PC-9 (cell line): ENCODE measurements at regions of chr7 and their contacts with region 1.

Region 1: GRCh38 chr7:101363734-101364374 is 1.2 kb downstream of the COL26A1 start:
- DNase-seq: peak; percentile 39 to 73
- H3K4me3 ChIP-seq: peak overlapping the region; percentile 34; the same call in 1 of the 2 replicates
- H3K27ac ChIP-seq: no peak overlapping the region
- H3K4me1 ChIP-seq: no peaks in the 10 kb centered on the region
- H3K27me3 ChIP-seq: 0 out of 2 replicates have a peak, but pooled peaks cover 7% of the 10 kb centered on the region
- CTCF ChIP-seq: peak; percentile 86

Region 2: GRCh38 chr7:101378751-101379184 is 14.9 kb after region 1 on chr7:
- CTCF ChIA-PET with region 1: interaction called, 10 read pairs
- POLR2A ChIA-PET with region 1: no interaction called
- intact Hi-C with region 1: no loop called
- DNase-seq: no peak
- H3K4me3 ChIP-seq: no peak overlapping the region
- H3K27ac ChIP-seq: no peak overlapping the region
- H3K4me1 ChIP-seq: no peaks in the 10 kb centered on the region
- H3K27me3 ChIP-seq: peaks cover 12% of the 10 kb centered on the region
- CTCF ChIP-seq: no peak

Region 3: GRCh38 chr7:101410743-101411507 is 47.1 kb after region 1 on chr7:
- CTCF ChIA-PET with region 1: interaction called, 3 read pairs
- POLR2A ChIA-PET with region 1: no interaction called
- intact Hi-C with region 1: loop called (anchors 5 kb)
- DNase-seq: peak in 1 of 2 experiments; percentile 31
- H3K4me3 ChIP-seq: no peak overlapping the region
- H3K27ac ChIP-seq: no peak overlapping the region
- H3K4me1 ChIP-seq: no peaks in the 10 kb centered on the region
- H3K27me3 ChIP-seq: peaks cover 31% of the 10 kb centered on the region
- CTCF ChIP-seq: peak; percentile 86

Region 4: DNA sequence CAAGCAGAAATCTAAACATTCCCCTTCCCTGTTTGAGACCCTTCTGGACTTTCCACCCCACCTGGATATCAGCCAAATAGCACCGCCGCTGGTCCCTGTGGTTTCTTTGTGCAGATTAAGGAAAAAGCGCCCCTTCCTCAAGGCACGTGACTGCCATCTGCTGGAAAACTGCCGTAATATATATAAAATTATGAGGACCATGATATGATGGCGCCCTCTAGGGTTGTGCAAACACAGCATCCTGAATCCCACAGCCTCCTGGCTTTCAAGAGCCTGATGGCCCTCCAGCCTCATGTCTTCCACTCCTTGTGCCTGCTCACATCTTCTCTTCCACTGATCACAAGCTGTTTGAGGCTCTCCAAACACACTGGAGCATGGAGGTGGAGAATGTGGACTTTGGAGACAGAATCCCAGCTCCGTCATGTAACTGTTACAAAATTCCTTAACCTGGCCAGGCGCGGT is 144.0 kb after region 1 on chr7:
- CTCF ChIA-PET with region 1: interaction called, 12 read pairs
- POLR2A ChIA-PET with region 1: interaction called, 7 read pairs
- intact Hi-C with region 1: loop called (anchors 1 kb)
- DNase-seq: peak; percentile 46 to 70
- H3K4me3 ChIP-seq: no peak overlapping the region
- H3K27ac ChIP-seq: no peak overlapping the region
- H3K4me1 ChIP-seq: no peaks in the 10 kb centered on the region
- H3K27me3 ChIP-seq: peaks cover 57% of the 10 kb centered on the region
- CTCF ChIP-seq: peak; percentile 87